Activated T-helper 1 cell treated with anti-CD3 and anti-CD28 coated beads, Interleukin-12 subunit alpha, Interleukin-12 subunit beta, Interleukin-2, Interleukin-4 antibody, amounts not matched to agents 30 ng/mL and 10 ng/mL and 1 ng/mL, durations not matched to agents 14 hours and 24 hours and 36 hours (primary cell): ENCODE measurements at regions of chr3 and their contacts with region 1.

Region 1: GRCh38 chr3:121545574-121546455 is at the start of gene POLQ:
- DNase-seq: peak; percentile 83
- H3K4me3 Mint-ChIP-seq: peak within 1 kb of the TSS; percentile 89
- H3K27ac Mint-ChIP-seq: peak within 1 kb of the TSS; percentile 88
- H3K4me1 Mint-ChIP-seq: peaks cover 32% of the 10 kb centered on the region
- H3K27me3 Mint-ChIP-seq: peaks cover 2% of the 10 kb centered on the region
- total RNA-seq, gene POLQ: 29.0 and 30.1 TPM in 2 replicates

Region 2: DNA sequence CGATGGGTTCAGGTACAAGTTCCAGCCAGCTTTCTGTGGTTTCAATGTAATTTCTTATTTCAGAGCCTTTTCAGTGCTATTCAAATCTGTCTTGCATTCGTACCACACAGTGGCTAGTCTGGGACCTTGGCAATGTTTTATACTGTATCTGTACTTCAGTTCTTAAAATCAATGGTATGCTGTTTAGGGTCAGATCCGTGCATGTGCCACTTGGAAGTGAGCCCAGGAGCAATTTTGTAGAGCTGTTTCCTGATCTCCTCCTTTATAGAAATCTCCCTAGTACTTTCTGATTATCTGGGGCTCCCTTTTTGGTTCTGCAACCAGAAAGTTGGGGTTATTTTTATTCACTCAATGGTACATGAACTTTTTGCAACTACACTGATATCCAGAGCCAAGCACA is 1009.2 kb before region 1 on chr3:
- intact Hi-C with region 1: no loop called
- DNase-seq: no peak
- H3K4me3 Mint-ChIP-seq: no peak overlapping the region
- H3K27ac Mint-ChIP-seq: no peak overlapping the region
- H3K4me1 Mint-ChIP-seq: no peaks in the 10 kb centered on the region
- H3K27me3 Mint-ChIP-seq: peaks cover 11% of the 10 kb centered on the region

Region 3: DNA sequence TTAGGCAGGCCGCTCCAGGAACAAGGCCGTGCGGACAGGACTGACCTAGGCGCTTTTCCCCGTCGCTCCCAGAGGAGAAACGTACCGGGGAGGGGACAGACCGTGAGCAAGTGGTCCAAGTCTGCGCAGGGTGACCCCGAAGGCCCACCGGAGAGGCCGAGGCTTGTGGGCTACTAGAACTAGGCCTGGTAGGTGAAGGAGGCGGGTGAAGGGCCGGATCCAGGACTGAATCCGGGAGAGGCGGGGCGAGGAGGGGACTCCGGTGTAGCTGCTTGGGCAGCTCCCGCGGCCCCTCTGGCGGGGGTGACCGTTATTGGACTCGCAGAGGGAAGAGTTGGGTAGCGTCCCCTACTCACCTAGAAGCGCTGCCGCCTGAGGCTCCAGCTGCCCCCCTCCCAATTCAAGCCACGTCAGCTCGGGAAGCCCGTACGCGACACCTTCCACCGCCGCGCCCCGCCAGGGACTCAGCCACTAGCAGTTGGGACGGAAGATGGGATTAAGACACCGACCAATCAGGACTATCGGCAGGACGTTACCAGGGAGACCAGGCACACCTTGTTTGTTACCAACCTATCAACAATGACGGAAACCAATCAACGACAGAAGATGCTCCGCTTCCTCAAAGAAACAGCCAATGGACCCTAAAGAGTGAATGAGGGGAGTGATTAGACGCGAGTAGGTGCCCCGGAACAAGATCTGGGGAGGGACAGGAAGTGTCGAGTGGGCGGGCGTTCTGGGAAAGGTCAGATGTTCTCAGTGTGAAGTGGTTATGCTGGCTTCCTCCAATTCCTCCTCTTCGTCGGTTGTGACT is 203.7 kb after region 1 on chr3 and contains the start of gene GOLGB1:
- intact Hi-C with region 1: loop called (anchors 1 kb)
- DNase-seq: peak; percentile 89
- H3K4me3 Mint-ChIP-seq: no peak within 1 kb of the TSS
- H3K27ac Mint-ChIP-seq: no peak within 1 kb of the TSS
- H3K4me1 Mint-ChIP-seq: peaks cover 5% of the 10 kb centered on the region
- H3K27me3 Mint-ChIP-seq: peaks cover 12% of the 10 kb centered on the region
- total RNA-seq, gene GOLGB1: 23.2 and 23.6 TPM in 2 replicates

Region 4: DNA sequence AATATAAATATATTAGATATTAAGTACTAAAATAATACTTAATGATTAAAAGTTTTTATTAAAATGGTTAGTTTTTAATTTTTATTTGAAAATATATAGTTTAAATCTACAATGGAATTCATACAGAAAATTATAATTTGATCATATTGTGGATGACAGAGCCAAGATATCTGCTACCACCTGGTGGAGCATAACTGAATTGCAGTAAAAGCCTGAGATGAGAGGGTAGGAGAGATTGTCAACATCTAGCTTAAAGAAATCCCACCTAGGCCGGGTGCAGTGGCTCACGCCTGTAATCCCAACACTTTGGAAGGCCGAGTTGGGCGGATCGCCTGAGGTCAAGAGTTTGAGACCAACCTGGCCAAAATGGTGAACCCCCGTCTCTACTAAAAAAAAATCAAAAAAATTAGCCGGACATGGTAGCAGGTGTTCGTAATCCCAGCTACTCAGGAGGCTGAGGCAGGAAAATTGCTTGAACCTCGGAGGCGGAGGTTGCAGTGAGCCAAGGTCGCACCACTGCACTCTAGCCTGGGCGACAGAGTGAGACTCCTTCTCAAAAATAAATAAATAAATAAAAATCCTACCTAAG is 754.2 kb after region 1 on chr3:
- intact Hi-C with region 1: loop called (anchors 1 kb)
- DNase-seq: no peak
- H3K4me3 Mint-ChIP-seq: no peak overlapping the region
- H3K27ac Mint-ChIP-seq: no peak overlapping the region
- H3K4me1 Mint-ChIP-seq: peaks cover 28% of the 10 kb centered on the region
- H3K27me3 Mint-ChIP-seq: no peaks in the 10 kb centered on the region

Region 5: DNA sequence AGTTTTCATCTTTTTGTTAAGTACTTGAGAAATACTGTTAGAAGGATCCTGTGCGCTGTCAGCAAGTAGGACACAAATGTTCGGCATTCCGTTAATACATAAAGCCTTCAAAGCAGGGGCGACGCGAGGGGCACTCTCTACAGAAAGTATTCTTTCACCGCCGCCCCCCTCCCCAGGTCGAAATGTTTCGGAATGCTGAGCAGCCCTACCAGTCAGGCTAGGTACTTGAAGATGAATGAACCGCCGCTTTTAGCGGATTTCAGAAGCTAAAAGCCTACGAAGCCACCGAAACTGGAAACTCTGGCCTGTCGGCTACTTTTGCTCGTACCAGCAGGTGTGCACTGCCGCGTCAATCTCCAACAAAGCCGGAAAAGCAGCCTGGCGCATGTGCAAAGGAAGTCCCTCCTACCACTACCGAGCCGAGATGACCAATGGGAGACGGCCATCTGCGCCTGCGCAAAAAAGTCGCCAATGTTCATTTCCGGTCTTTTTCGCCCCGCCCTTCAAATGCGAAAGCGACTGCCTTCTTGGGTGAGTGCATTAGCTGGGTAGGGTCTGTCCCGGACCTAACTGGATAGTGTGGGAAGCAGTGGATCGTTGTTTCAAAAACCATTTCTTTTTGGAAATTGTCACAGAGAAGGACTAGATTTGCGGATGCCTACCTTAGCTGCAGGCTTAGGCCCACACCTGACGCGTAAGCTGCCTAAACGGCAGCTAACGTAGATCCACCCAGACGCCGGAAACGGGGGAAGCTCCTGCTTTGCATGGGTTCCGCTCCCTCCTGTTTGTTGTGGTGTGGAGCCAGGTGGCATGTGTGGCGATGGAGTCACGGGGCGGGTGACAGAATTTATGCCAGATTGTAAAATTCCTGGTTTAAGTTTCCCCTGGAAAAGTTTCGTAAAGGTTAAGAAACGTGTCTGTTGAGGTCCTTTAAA is 870.2 kb after region 1 on chr3 and contains the start of gene WDR5B:
- intact Hi-C with region 1: loop called (anchors 1 kb)
- DNase-seq: peak; percentile 96
- H3K4me3 Mint-ChIP-seq: peak within 1 kb of the TSS; percentile 98
- H3K27ac Mint-ChIP-seq: peak within 1 kb of the TSS; percentile 99
- H3K4me1 Mint-ChIP-seq: peaks cover 48% of the 10 kb centered on the region
- H3K27me3 Mint-ChIP-seq: no peaks in the 10 kb centered on the region
- total RNA-seq, gene WDR5B: 4.3 and 5.6 TPM in 2 replicates

Region 6: GRCh38 chr3:122679085-122679881 is 1133.5 kb after region 1 on chr3:
- intact Hi-C with region 1: loop called (anchors 1 kb)
- DNase-seq: peak; percentile 77
- H3K4me3 Mint-ChIP-seq: peak overlapping the region; percentile 95
- H3K27ac Mint-ChIP-seq: peak overlapping the region; percentile 97
- H3K4me1 Mint-ChIP-seq: peaks cover 54% of the 10 kb centered on the region
- H3K27me3 Mint-ChIP-seq: no peaks in the 10 kb centered on the region

Region 7: GRCh38 chr3:123201566-123202427 is 1656.0 kb after region 1 on chr3 and contains the start of gene SEC22A:
- intact Hi-C with region 1: loop called (anchors 2 kb)
- DNase-seq: peak; percentile 95
- H3K4me3 Mint-ChIP-seq: peak within 1 kb of the TSS; percentile 87
- H3K27ac Mint-ChIP-seq: peak within 1 kb of the TSS; percentile 96
- H3K4me1 Mint-ChIP-seq: peaks cover 29% of the 10 kb centered on the region
- H3K27me3 Mint-ChIP-seq: peaks cover under 1% of the 10 kb centered on the region
- total RNA-seq, gene SEC22A: 15.8 and 18.5 TPM in 2 replicates